ENCODE measurements at regions of chr12 and their contacts with region 1.

Region 1: GRCh38 chr12:111685744-111686517 is at the starts of genes ACAD10 and BRAP:
- DNase-seq: peak; percentile 89 to 97 (median 94)
- ATAC-seq: peak; percentile 92
- H3K4me3 ChIP-seq: peak within 1 kb of the TSS; percentile 77 to 95
- H3K4me3 Mint-ChIP-seq: peak within 1 kb of the TSS; percentile 95
- H3K27ac ChIP-seq: peak within 1 kb of the TSS; percentile 82 to 92
- H3K27ac Mint-ChIP-seq: peak within 1 kb of the TSS; percentile 95
- H3K4me1 ChIP-seq: peaks cover 27% of the 10 kb centered on the region
- H3K4me1 Mint-ChIP-seq: peaks cover 39% of the 10 kb centered on the region
- H3K27me3 ChIP-seq: no peaks in the 10 kb centered on the region
- H3K27me3 Mint-ChIP-seq: no peaks in the 10 kb centered on the region
- CTCF ChIP-seq: no peak
- total RNA-seq, gene ACAD10: 12.3 to 13.6 TPM
- total RNA-seq, gene BRAP: 29.3 to 30.4 TPM

Region 2: DNA sequence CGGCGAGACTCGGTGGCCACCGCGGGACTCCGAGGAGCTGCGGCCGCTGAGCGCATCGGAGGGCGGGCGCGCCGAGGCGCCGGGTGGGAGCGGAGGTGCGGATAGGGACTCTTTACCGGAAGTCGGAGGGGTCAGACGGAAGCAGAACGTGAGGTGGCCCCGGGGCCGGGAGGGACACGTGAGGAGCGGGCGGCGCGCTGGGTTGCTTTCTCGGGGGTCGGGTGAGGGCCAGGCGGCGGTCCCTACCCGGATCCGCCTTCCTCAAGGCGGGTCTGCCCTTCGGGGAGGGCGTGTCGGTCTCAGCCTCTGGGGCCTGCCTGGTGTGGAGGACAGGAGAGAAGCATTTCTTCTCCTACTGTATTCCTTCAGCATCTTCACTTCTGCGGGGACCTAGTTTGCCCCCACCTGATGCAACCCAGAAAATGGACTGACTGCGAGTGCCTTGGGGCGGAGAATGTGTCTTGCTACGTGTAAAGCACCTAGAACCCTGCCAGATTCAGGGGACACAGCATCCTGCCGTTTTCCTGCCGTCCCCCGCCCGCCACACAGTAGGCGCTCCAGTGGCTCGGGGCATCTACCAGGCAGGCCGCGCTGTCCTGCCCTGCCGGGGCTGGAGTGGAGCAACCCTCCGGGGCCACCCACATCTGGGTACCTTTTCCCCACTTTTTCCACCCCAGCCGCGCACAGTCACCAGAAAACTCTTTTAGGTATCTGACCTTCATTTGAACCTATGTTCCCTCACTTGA is 86.3 kb before region 1 on chr12:
- CTCF ChIA-PET with region 1: no interaction called
- POLR2A ChIA-PET with region 1: no interaction called
- intact Hi-C with region 1: loop called (anchors 1 to 2 kb)
- DNase-seq: peak; percentile 70 to 95 (median 87)
- ATAC-seq: peak; percentile 75
- H3K4me3 ChIP-seq: peak overlapping the region; percentile 68 to 97
- H3K4me3 Mint-ChIP-seq: peak overlapping the region; percentile 90
- H3K27ac ChIP-seq: peak overlapping the region; percentile 72 to 77
- H3K27ac Mint-ChIP-seq: peak overlapping the region; percentile 91
- H3K4me1 ChIP-seq: peaks cover 20% of the 10 kb centered on the region
- H3K4me1 Mint-ChIP-seq: peaks cover 34% of the 10 kb centered on the region
- H3K27me3 ChIP-seq: no peaks in the 10 kb centered on the region
- H3K27me3 Mint-ChIP-seq: no peaks in the 10 kb centered on the region
- CTCF ChIP-seq: no peak

Region 3: GRCh38 chr12:111812881-111813741 is 127.2 kb after region 1 on chr12:
- CTCF ChIA-PET with region 1: no interaction called
- POLR2A ChIA-PET with region 1: no interaction called
- intact Hi-C with region 1: loop called (anchors 2 to 10 kb)
- DNase-seq: peak; percentile 26 to 85 (median 60)
- ATAC-seq: peak; percentile 100
- H3K4me3 ChIP-seq: no peak overlapping the region
- H3K4me3 Mint-ChIP-seq: no peak overlapping the region
- H3K27ac ChIP-seq: no peak overlapping the region
- H3K27ac Mint-ChIP-seq: no peak overlapping the region
- H3K4me1 ChIP-seq: peaks cover 6% of the 10 kb centered on the region
- H3K4me1 Mint-ChIP-seq: peaks cover 7% of the 10 kb centered on the region
- H3K27me3 ChIP-seq: no peaks in the 10 kb centered on the region
- H3K27me3 Mint-ChIP-seq: no peaks in the 10 kb centered on the region
- CTCF ChIP-seq: peak; percentile 81

Region 4: GRCh38 chr12:112125250-112125999 is 439.5 kb after region 1 on chr12 and contains the start of gene TRAFD1:
- CTCF ChIA-PET with region 1: no interaction called
- POLR2A ChIA-PET with region 1: no interaction called
- intact Hi-C with region 1: loop called (anchors 5 to 10 kb)
- DNase-seq: peak; percentile 96 to 99 (median 98)
- ATAC-seq: peak; percentile 97
- H3K4me3 ChIP-seq: peak within 1 kb of the TSS; percentile 93 to 98
- H3K4me3 Mint-ChIP-seq: peak within 1 kb of the TSS; percentile 85
- H3K27ac ChIP-seq: peak within 1 kb of the TSS; percentile 82 to 89
- H3K27ac Mint-ChIP-seq: peak within 1 kb of the TSS; percentile 87
- H3K4me1 ChIP-seq: peaks cover 38% of the 10 kb centered on the region
- H3K4me1 Mint-ChIP-seq: peaks cover 40% of the 10 kb centered on the region
- H3K27me3 ChIP-seq: no peaks in the 10 kb centered on the region
- H3K27me3 Mint-ChIP-seq: no peaks in the 10 kb centered on the region
- CTCF ChIP-seq: no peak
- total RNA-seq, gene TRAFD1: 21.1 to 25.4 TPM

Region 5: DNA sequence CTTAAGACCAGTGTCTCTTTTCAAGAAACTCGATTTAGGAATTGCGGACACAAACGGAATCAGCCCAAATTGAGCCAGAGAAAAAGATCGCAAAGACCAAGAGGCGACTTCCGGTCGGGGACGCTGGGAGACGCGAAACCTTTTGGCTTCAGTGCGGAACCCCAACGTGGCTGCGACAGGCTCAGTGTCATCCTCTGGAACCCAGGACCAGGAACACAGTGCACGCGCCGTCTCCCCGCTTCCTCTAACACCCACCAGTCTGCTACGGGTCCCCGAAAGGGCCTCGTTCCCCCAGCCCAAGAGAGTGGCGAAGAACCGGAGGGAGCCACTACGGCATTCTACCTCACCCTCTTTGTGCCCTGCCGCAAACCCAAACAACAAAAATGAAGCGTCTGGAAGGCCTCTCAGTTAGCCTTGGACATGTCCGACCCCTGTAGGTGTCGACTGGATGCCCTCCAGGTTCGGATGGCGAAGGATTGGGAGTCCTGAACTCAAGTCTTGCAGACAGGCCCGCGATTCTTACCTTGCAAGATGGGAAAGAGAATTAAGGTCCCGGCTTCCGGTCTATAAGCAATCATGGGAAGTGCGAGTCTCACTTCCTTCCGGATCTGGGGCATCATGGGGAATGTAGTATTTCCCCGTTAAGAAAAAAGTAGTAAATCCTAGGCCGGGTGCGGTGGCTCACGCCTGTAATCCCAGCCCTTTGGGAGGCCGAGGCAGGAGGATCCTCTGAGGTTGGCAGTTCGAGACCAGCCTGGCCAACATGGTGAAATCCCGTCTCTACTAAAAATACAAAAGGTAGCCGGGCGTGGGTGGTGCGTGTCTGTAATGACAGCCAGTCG is 723.4 kb after region 1 on chr12 and contains the start of gene RPL6:
- CTCF ChIA-PET with region 1: no interaction called
- POLR2A ChIA-PET with region 1: no interaction called
- intact Hi-C with region 1: loop called in 1 of 2 experiments (anchors 10 kb)
- DNase-seq: peak; percentile 56 to 93 (median 75)
- ATAC-seq: peak; percentile 81
- H3K4me3 ChIP-seq: peak within 1 kb of the TSS; percentile 83 to 89
- H3K4me3 Mint-ChIP-seq: peak within 1 kb of the TSS; percentile 100
- H3K27ac ChIP-seq: peak within 1 kb of the TSS; percentile 87 to 92
- H3K27ac Mint-ChIP-seq: peak within 1 kb of the TSS; percentile 100
- H3K4me1 ChIP-seq: peaks cover 28% of the 10 kb centered on the region
- H3K4me1 Mint-ChIP-seq: peaks cover 38% of the 10 kb centered on the region
- H3K27me3 ChIP-seq: no peaks in the 10 kb centered on the region
- H3K27me3 Mint-ChIP-seq: no peaks in the 10 kb centered on the region
- CTCF ChIP-seq: no peak
- total RNA-seq, gene RPL6: 1,700 to 1,770 TPM